ENCODE measurements at regions of chr15 and their contacts with region 1.

Region 1: GRCh38 chr15:49313650-49314049 is 109.4 kb upstream of the FGF7 start:
- DNase-seq: no peak
- ATAC-seq: no peak
- H3K4me3 Mint-ChIP-seq: no peak overlapping the region
- H3K27ac Mint-ChIP-seq: no peak overlapping the region
- H3K4me1 Mint-ChIP-seq: peaks cover 24% of the 10 kb centered on the region
- H3K27me3 Mint-ChIP-seq: no peaks in the 10 kb centered on the region
- CTCF ChIP-seq: no peak

Region 2: GRCh38 chr15:49279521-49280456 is 33.9 kb before region 1 on chr15:
- CTCF ChIA-PET with region 1: no interaction called
- POLR2A ChIA-PET with region 1: interaction called, 10 read pairs
- DNase-seq: no peak
- ATAC-seq: no peak
- H3K4me3 Mint-ChIP-seq: no peak overlapping the region
- H3K27ac Mint-ChIP-seq: no peak overlapping the region
- H3K4me1 Mint-ChIP-seq: 0 out of 2 replicates have a peak, but pooled peaks cover 5% of the 10 kb centered on the region
- H3K27me3 Mint-ChIP-seq: no peaks in the 10 kb centered on the region
- CTCF ChIP-seq: no peak

Region 3: DNA sequence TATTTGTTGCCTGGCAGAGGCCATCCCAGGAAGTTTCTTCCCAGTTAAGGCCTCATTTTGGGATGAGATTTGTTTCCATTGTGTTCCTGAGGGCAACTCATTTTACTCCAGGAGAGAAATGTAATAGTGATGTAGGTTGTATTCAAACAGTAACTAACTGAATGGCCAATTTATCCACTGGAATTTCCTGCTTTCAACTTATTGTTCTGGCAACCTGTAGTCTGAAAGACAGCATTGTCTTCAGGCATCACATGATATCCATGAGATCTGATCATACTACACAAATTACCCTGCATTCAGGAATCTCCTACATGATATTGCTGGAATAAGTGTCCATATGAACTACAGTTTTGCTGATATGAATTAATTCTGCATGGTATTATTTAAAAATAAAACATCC is 29.9 kb after region 1 on chr15:
- CTCF ChIA-PET with region 1: no interaction called
- POLR2A ChIA-PET with region 1: no interaction called
- DNase-seq: no peak
- ATAC-seq: no peak
- H3K4me3 Mint-ChIP-seq: no peak overlapping the region
- H3K27ac Mint-ChIP-seq: peak overlapping the region; percentile 39
- H3K4me1 Mint-ChIP-seq: peaks cover 30% of the 10 kb centered on the region
- H3K27me3 Mint-ChIP-seq: no peaks in the 10 kb centered on the region
- CTCF ChIP-seq: no peak